ENCODE measurements at regions of chr5 and their contacts with region 1.

Region 1: GRCh38 chr5:15013654-15014463 is 142.3 kb upstream of the ANKH start:
- DNase-seq: no peak
- H3K4me3 ChIP-seq: no peak overlapping the region
- H3K27ac ChIP-seq: no peak overlapping the region
- H3K4me1 ChIP-seq: peaks cover 7 to 9% of the 10 kb centered on the region in 2 donors
- H3K27me3 ChIP-seq: no peaks in the 10 kb centered on the region
- CTCF ChIP-seq: peak in 5 of 6 experiments; percentile 9 to 77 (median 61)
- POLR2A ChIP-seq: no peak

Region 2: GRCh38 chr5:14727428-14727865 is 286.4 kb before region 1 on chr5:
- intact Hi-C with region 1: loop called (anchors 5 kb)
- DNase-seq: peak; percentile 65 to 83
- H3K4me3 ChIP-seq: no peak overlapping the region
- H3K27ac ChIP-seq: no peak overlapping the region
- H3K4me1 ChIP-seq: no peaks in the 10 kb centered on the region
- H3K27me3 ChIP-seq: no peaks in the 10 kb centered on the region
- CTCF ChIP-seq: peak; percentile 83 to 93 (median 90)
- POLR2A ChIP-seq: no peak